ENCODE measurements at regions of chrX and their contacts with region 1.

Region 1: GRCh38 chrX:110450050-110450449 is 91.4 kb downstream of the RTL9 start:
- DNase-seq: peak; percentile 66 to 94
- H3K4me3 ChIP-seq: no peak overlapping the region
- CTCF ChIP-seq: no peak
- POLR2A ChIP-seq: no peak

Region 2: DNA sequence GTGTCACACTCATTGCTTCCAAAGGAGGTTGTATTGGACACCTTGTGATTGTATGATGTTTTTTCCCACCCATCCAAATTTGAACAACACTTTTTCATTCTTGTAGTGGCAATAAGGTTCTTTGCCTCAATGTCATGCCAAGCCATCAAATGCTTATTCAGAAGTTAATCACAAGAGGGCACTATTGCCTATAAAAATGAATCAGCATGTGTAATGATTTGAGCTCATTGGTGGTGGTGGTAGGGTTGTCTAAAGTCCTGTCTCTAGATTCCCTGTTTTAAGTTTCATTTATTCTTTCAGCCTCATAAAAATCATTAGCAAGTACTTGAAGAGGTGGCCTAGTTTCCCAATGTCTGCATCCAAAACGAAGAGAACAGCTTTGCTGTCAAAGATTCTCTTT is 1750.7 kb before region 1 on chrX:
- intact Hi-C with region 1: no loop called
- DNase-seq: no peak
- H3K4me3 ChIP-seq: no peak overlapping the region
- CTCF ChIP-seq: no peak
- POLR2A ChIP-seq: no peak

Region 3: DNA sequence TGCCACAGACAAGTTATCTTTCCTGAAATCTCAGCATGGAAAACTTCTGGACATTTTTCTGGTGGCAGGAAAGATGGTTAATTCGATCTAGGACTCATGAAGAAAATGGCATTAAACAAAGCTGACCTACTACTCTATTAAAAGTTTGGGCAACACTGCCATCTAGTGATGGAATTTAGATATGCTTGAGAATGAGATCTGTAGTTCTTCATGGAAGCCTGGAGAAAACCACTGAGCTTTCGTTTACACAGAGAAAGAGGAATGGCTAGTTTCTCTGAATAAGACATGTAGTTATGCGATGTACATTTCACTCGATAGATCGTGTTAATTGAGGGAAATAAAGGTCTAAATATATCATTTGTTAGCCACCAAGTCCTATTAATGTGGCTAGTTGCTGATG is 397.3 kb after region 1 on chrX:
- intact Hi-C with region 1: loop called (anchors 5 kb)
- DNase-seq: no peak
- H3K4me3 ChIP-seq: no peak overlapping the region
- CTCF ChIP-seq: no peak
- POLR2A ChIP-seq: no peak